ENCODE measurements at regions of chr9 and their contacts with region 1.

Region 1: GRCh38 chr9:131739980-131740648 is at the start of gene RAPGEF1:
- DNase-seq: no peak
- H3K4me3 ChIP-seq: peak within 1 kb of the TSS; percentile 60 to 94 (median 72)
- H3K27ac ChIP-seq: peak within 1 kb of the TSS; percentile 86 to 97 (median 88)
- H3K4me1 ChIP-seq: peaks cover 38 to 46% (median 43%) of the 10 kb centered on the region in 4 donors
- H3K27me3 ChIP-seq: no peaks in the 10 kb centered on the region
- CTCF ChIP-seq: peak; percentile 80 to 96 (median 87)
- EP300 ChIP-seq: no peak
- POLR2A ChIP-seq: no peak
- total RNA-seq, gene RAPGEF1: 66.6 to 138 (median 101) TPM

Region 2: DNA sequence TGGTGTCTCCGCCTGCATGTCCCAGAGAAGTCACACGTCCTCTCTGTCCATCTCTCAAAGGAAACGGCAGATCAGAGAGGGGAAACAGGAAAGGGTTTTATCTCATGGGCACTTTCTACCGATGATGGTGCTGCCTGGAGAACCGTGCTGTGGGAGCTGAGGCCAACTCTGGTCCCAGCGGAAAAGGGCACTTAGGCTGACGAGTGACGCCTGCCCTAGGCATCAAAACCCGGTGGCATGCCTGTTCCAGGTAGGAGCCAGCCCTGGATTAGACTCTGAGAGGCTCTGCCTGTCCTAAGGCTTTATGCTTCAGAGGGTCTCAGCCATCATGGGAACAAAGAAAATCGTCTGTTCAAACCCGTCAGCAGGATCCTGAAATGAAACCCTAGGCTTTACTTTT is 147.8 kb before region 1 on chr9:
- intact Hi-C with region 1: loop called (anchors 1 kb)
- DNase-seq: no peak
- H3K4me3 ChIP-seq: no peak overlapping the region
- H3K27ac ChIP-seq: no peak overlapping the region
- H3K4me1 ChIP-seq: peaks cover 0 to 12% (median 6%) of the 10 kb centered on the region in 4 donors
- H3K27me3 ChIP-seq: no peaks in the 10 kb centered on the region
- CTCF ChIP-seq: no peak
- EP300 ChIP-seq: no peak
- POLR2A ChIP-seq: no peak

Region 3: GRCh38 chr9:131678499-131679111 is 61.5 kb before region 1 on chr9:
- intact Hi-C with region 1: loop called (anchors 5 kb)
- DNase-seq: peak; percentile 93
- H3K4me3 ChIP-seq: no peak overlapping the region
- H3K27ac ChIP-seq: peak overlapping the region; percentile 78 to 90 (median 83)
- H3K4me1 ChIP-seq: peaks cover 66 to 86% (median 73%) of the 10 kb centered on the region in 4 donors
- H3K27me3 ChIP-seq: no peaks in the 10 kb centered on the region
- CTCF ChIP-seq: no peak
- EP300 ChIP-seq: no peak
- POLR2A ChIP-seq: no peak